IMR-90 (cell line): ENCODE measurements at regions of chr2 and their contacts with region 1.

Region 1: DNA sequence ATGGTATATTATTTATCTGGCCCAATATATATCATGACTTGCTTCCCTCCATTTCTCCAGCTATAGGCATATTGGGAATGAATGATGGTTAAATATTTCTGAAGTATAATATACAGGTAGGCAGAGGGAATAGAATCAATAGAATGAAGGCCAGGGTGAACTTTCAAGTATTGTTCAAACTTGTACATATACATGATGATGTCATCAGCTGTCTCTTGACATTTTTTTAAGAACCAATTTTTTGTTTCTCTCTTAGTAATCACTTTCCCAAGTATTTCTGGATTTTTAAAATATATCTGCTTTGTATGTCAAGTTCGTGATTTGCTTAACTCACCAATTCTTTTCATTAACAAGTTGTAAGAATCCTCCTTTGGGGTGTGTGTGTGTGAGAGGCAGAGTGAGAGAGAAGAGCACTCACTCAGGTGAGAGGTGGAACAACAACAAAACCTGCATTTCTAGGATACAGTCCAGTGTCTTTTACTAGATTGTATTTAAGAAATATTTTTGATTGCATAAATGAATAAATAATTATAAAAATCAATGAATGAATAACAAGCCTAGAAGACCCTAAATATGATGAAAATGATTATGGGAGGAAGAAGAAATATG is 1239.1 kb downstream of the LRP1B start:
- DNase-seq: no peak
- ATAC-seq: no peak
- H3K4me3 ChIP-seq: no peak overlapping the region
- H3K27ac ChIP-seq: no peak overlapping the region
- H3K4me1 ChIP-seq: peaks cover 8% of the 10 kb centered on the region
- H3K27me3 ChIP-seq: no peaks in the 10 kb centered on the region
- CTCF ChIP-seq: no peak
- POLR2A ChIP-seq: no peak
- RAD21 ChIP-seq: no peak

Region 2: DNA sequence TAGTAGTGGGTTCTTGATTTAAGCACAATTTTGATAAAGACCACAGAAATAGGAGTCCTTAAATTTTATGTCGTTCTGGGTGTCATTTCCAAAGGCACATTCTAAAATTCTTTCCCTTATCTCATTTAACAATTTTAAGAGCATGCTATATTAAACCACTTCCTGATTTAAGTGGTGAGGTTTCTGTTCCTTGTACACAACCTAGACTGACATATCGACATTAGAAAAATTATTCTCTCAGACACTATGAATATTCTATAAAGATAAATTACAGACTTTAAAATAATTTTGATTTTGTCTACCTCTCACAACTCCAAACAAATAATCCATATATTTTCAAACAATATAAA is 315.3 kb after region 1 on chr2:
- CTCF ChIA-PET with region 1: no interaction called
- POLR2A ChIA-PET with region 1: no interaction called
- dilution Hi-C with region 1: no loop called
- in situ Hi-C with region 1: no loop called
- intact Hi-C with region 1: no loop called
- DNase-seq: no peak
- ATAC-seq: no peak
- H3K4me3 ChIP-seq: no peak overlapping the region
- H3K27ac ChIP-seq: no peak overlapping the region
- H3K4me1 ChIP-seq: no peaks in the 10 kb centered on the region
- H3K27me3 ChIP-seq: no peaks in the 10 kb centered on the region
- CTCF ChIP-seq: no peak
- POLR2A ChIP-seq: no peak
- RAD21 ChIP-seq: no peak

Region 3: GRCh38 chr2:141399270-141399669 is 507.6 kb after region 1 on chr2:
- CTCF ChIA-PET with region 1: no interaction called
- POLR2A ChIA-PET with region 1: no interaction called
- dilution Hi-C with region 1: no loop called
- in situ Hi-C with region 1: no loop called
- intact Hi-C with region 1: loop called (anchors 10 kb)
- DNase-seq: peak; percentile 14
- ATAC-seq: no peak
- H3K4me3 ChIP-seq: no peak overlapping the region
- H3K27ac ChIP-seq: no peak overlapping the region
- H3K4me1 ChIP-seq: no peaks in the 10 kb centered on the region
- H3K27me3 ChIP-seq: no peaks in the 10 kb centered on the region
- CTCF ChIP-seq: peak; percentile 54
- POLR2A ChIP-seq: no peak
- RAD21 ChIP-seq: peak; percentile 66